ENCODE measurements at regions of chrX and their contacts with region 1.

Region 1: GRCh38 chrX:41116948-41117347 is 31.7 kb downstream of the USP9X start:
- DNase-seq: no peak
- ATAC-seq: no peak
- H3K4me3 ChIP-seq: no peak overlapping the region
- H3K27ac ChIP-seq: no peak overlapping the region
- H3K4me1 ChIP-seq: peaks cover 24% of the 10 kb centered on the region
- H3K27me3 ChIP-seq: no peaks in the 10 kb centered on the region
- CTCF ChIP-seq: no peak

Region 2: DNA sequence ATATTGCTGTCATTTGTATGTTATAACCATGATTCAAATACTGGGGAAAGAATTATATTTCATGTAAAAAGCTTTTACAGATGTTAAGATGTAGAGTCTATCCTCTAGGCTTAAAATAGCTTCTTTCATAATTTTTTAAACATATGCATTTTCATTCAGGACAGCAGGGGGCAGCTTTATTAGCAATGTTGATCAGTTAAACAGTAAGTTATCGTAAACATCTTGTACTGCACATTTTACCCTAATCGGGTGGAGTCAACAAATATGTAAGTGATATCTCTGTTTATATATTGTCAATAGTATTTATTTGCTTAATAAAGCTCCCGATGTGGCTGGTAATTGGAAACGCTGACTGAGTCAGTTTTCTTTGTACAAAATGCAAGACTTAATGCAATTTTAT is 239.1 kb before region 1 on chrX:
- intact Hi-C with region 1: loop called (anchors 10 kb)
- DNase-seq: no peak
- ATAC-seq: no peak
- H3K4me3 ChIP-seq: no peak overlapping the region
- H3K27ac ChIP-seq: no peak overlapping the region
- H3K4me1 ChIP-seq: no peaks in the 10 kb centered on the region
- H3K27me3 ChIP-seq: no peaks in the 10 kb centered on the region
- CTCF ChIP-seq: peak; percentile 53

Measured in upper lobe of right lung (tissue), 1 donor.